B cell (primary cell): ENCODE measurements at regions of chr9 and their contacts with region 1.

Region 1: GRCh38 chr9:74577956-74578355 is 80.8 kb downstream of the RORB start:
- DNase-seq: peak; percentile 31
- ATAC-seq: no peak
- H3K4me3 ChIP-seq: no peak overlapping the region
- H3K4me3 Mint-ChIP-seq: no peak overlapping the region
- H3K27ac ChIP-seq: no peak overlapping the region
- H3K27ac Mint-ChIP-seq: no peak overlapping the region
- H3K4me1 ChIP-seq: no peaks in the 10 kb centered on the region
- H3K4me1 Mint-ChIP-seq: peaks cover 2% of the 10 kb centered on the region
- H3K27me3 ChIP-seq: no peaks in the 10 kb centered on the region
- H3K27me3 Mint-ChIP-seq: peaks cover 11% of the 10 kb centered on the region
- CTCF ChIP-seq: peak; percentile 52

Region 2: GRCh38 chr9:74458832-74459231 is 119.1 kb before region 1 on chr9:
- CTCF ChIA-PET with region 1: no interaction called
- POLR2A ChIA-PET with region 1: no interaction called
- intact Hi-C with region 1: no loop called
- DNase-seq: no peak
- ATAC-seq: no peak
- H3K4me3 ChIP-seq: no peak overlapping the region
- H3K4me3 Mint-ChIP-seq: no peak overlapping the region
- H3K27ac ChIP-seq: no peak overlapping the region
- H3K27ac Mint-ChIP-seq: no peak overlapping the region
- H3K4me1 ChIP-seq: no peaks in the 10 kb centered on the region
- H3K4me1 Mint-ChIP-seq: no peaks in the 10 kb centered on the region
- H3K27me3 ChIP-seq: no peaks in the 10 kb centered on the region
- H3K27me3 Mint-ChIP-seq: no peaks in the 10 kb centered on the region
- CTCF ChIP-seq: no peak

Region 3: DNA sequence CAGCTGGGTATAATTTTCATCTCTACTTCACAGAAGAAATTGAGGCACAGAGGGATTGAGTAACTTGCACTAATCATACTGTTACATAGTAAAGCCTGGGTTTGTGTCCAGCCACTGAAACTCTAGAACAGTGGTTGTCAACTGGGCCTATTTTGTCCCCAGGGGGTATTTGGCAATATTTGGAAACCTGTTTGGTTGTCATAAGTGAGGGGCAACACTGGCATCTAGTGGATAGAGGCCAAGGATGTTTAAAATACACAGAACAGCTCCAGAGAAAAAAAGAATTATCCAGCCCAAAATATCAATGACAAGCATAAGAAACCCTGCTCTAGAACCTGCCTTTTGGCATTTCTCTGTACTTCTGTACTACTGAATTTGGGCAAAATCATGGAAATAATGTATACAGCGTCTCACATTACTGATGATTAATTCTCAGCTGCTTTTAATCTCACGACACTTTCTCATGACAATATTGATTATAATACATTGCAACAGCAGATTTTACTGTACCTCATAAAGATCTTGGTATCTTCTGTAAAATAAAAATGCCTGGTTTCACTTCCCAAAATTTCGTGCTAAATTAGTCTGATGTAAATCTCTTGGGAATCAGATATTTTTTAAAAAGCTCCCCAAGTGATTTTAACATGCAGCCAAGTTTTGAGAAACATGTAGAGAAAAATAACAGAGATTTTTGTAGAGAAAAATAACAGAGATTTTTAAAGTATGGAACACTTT is 31.9 kb after region 1 on chr9:
- CTCF ChIA-PET with region 1: interaction called, 3 read pairs
- POLR2A ChIA-PET with region 1: no interaction called
- intact Hi-C with region 1: loop called (anchors 5 kb)
- DNase-seq: peak; percentile 54
- ATAC-seq: peak; percentile 61
- H3K4me3 ChIP-seq: peak overlapping the region in 1 of 5 experiments; percentile 41
- H3K4me3 Mint-ChIP-seq: peak overlapping the region; percentile 79
- H3K27ac ChIP-seq: peak overlapping the region; percentile 20 to 58
- H3K27ac Mint-ChIP-seq: peak overlapping the region; percentile 73
- H3K4me1 ChIP-seq: peaks cover 30 to 34% of the 10 kb centered on the region in 2 donors
- H3K4me1 Mint-ChIP-seq: peaks cover 33% of the 10 kb centered on the region
- H3K27me3 ChIP-seq: no peaks in the 10 kb centered on the region
- H3K27me3 Mint-ChIP-seq: peaks cover 13% of the 10 kb centered on the region
- CTCF ChIP-seq: no peak

Region 4: DNA sequence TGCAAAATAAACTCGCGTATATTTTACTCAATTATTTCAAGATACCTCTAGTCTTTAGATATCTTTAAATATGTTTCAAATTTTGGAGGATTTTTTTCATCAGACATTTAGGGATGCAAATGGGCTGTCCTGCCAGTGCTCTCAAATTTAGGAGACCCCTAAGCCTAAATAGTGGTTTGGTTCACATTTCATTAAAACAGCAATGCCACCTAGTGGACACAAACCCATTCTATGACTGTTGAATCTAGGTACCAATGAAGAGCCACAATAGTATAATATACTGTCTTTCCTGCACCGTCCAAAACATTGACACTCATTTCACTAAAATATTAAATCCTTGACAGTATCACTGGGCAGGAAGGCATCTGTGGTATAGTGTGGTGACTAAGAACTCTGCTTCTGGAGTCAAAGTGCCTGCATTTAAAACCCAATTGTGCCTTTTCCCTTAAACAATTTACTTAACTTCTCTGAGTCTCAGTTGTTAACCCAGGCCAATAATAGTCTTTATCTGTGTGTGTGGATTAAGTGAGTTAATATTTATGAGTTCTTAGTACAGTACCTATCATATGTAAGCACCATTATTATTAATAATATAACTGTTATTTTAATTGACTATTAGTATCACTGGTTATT is 67.2 kb after region 1 on chr9:
- CTCF ChIA-PET with region 1: interaction called, 12 read pairs
- POLR2A ChIA-PET with region 1: no interaction called
- intact Hi-C with region 1: loop called (anchors 1 kb)
- DNase-seq: peak; percentile 36
- ATAC-seq: no peak
- H3K4me3 ChIP-seq: no peak overlapping the region
- H3K4me3 Mint-ChIP-seq: no peak overlapping the region
- H3K27ac ChIP-seq: no peak overlapping the region
- H3K27ac Mint-ChIP-seq: no peak overlapping the region
- H3K4me1 ChIP-seq: no peaks in the 10 kb centered on the region
- H3K4me1 Mint-ChIP-seq: peaks cover 1% of the 10 kb centered on the region
- H3K27me3 ChIP-seq: no peaks in the 10 kb centered on the region
- H3K27me3 Mint-ChIP-seq: peaks cover 20% of the 10 kb centered on the region
- CTCF ChIP-seq: peak; percentile 66

Region 5: GRCh38 chr9:74742792-74743730 is 165.1 kb after region 1 on chr9:
- CTCF ChIA-PET with region 1: no interaction called
- POLR2A ChIA-PET with region 1: no interaction called
- intact Hi-C with region 1: loop called (anchors 5 kb)
- DNase-seq: peak; percentile 25
- ATAC-seq: no peak
- H3K4me3 ChIP-seq: no peak overlapping the region
- H3K4me3 Mint-ChIP-seq: no peak overlapping the region
- H3K27ac ChIP-seq: no peak overlapping the region
- H3K27ac Mint-ChIP-seq: no peak overlapping the region
- H3K4me1 ChIP-seq: no peaks in the 10 kb centered on the region
- H3K4me1 Mint-ChIP-seq: no peaks in the 10 kb centered on the region
- H3K27me3 ChIP-seq: peaks cover 0 to 13% (median 8%) of the 10 kb centered on the region in 4 experiments
- H3K27me3 Mint-ChIP-seq: peaks cover 51% of the 10 kb centered on the region
- CTCF ChIP-seq: peak; percentile 60